Activated naive CD4-positive, alpha-beta T cell treated with anti-CD3 and anti-CD28 coated beads for 36 hours (primary cell): ENCODE measurements at regions of chr3 and their contacts with region 1.

Region 1: DNA sequence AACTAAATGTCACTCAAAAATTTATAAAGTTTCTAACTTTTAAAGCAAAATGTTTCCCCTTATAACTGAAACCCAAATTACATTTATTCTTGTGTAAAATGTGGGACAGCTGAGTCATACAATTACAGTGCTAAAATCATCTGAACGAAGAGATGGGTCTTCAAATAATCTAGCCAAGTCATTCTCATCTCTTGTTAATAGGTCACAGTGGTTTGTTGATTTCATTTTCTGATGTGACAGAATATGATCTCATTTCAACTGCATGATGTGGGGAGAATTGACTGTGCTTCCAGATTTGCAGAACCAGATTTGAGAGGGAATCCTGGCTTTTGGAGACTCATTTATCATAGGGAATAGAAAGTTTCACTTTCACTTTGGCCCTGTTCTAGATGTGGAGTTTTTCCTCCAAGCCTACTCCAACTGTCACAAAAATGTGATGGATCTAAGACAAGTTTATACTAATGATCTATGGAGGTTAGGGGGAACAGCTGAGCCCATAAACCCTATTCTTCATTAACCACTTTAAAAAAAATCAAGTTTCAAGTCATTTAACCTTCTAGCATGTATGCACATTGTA is 685.0 kb downstream of the PDCD6IP start:
- DNase-seq: no peak
- H3K4me3 Mint-ChIP-seq: no peak overlapping the region
- H3K27ac Mint-ChIP-seq: no peak overlapping the region
- H3K4me1 Mint-ChIP-seq: peaks cover 13% of the 10 kb centered on the region
- H3K27me3 Mint-ChIP-seq: peaks cover 4% of the 10 kb centered on the region

Region 2: DNA sequence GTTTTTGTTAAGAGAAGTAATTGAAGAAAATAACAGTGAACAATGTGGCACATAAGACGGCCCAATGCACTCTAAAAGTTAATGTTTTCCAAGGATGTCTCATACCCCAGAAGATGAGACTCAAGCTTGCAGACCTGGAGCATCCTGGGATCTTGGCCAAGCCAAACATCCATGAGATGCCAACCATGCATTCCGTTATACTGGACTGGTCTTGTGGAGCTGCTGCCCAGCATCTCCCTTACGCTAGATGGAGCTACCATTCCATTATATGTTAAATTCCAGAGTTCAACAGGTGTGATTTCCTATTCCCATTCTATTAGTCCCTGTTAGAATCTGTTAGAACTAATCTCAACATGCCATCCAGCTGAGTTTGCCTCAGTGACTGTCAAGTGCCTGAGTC is 503.1 kb before region 1 on chr3:
- CTCF ChIA-PET with region 1: no interaction called
- intact Hi-C with region 1: loop called (anchors 2 kb)
- DNase-seq: no peak
- H3K4me3 Mint-ChIP-seq: no peak overlapping the region
- H3K27ac Mint-ChIP-seq: no peak overlapping the region
- H3K4me1 Mint-ChIP-seq: no peaks in the 10 kb centered on the region
- H3K27me3 Mint-ChIP-seq: no peaks in the 10 kb centered on the region

Region 3: GRCh38 chr3:34511891-34512290 is 28.5 kb after region 1 on chr3:
- CTCF ChIA-PET with region 1: no interaction called
- intact Hi-C with region 1: no loop called
- DNase-seq: no peak
- H3K4me3 Mint-ChIP-seq: no peak overlapping the region
- H3K27ac Mint-ChIP-seq: no peak overlapping the region
- H3K4me1 Mint-ChIP-seq: no peaks in the 10 kb centered on the region
- H3K27me3 Mint-ChIP-seq: peaks cover 2% of the 10 kb centered on the region